ENCODE measurements at regions of chr6 and their contacts with region 1.

Region 1: DNA sequence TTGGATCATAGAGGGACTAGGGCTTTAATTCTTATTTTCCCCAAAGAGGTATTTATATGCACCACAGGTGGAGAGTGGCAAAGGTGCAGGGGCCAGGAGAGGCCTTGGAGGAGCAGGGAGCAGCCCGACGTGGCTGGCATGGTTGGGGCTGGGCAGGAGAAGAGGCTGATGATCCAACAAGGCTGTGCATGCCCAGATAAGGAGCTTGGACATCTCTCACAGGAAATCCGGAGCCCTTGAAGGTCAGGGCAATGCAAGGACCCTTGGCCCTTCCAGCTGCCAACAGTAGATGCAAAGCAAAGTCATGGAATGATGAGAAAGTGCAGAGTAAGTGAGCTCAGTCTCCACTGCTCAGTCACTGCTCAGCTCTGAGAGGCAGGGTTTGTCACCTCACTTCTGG is 39.9 kb upstream of the SIRT5 start:
- DNase-seq: no peak
- ATAC-seq: no peak

Region 2: DNA sequence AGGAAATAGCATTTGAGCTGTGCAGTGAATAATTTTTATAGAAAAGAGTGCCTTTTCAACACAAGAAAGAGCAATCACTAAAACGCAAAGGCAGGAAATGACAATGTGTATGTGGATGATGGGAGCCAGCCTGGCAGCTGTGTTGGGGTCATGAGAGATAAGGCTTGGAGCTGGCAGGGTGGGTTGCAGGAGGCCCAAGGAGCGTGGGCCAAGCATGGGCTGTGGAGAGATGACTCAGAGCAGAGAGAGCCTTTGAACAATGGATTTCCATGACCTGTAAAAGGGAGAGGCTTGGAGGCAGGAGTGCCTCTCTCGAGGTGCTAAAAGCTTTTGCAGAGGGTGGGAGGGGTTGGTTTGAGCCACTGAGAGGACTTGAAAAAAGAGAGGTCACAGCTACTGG is 199.6 kb before region 1 on chr6:
- intact Hi-C with region 1: loop called (anchors 1 kb)
- DNase-seq: no peak
- ATAC-seq: no peak

Region 3: GRCh38 chr6:13422681-13423221 is 111.8 kb before region 1 on chr6:
- intact Hi-C with region 1: no loop called
- DNase-seq: no peak
- ATAC-seq: no peak

Measured in sciatic nerve (tissue), 2 donors.